ENCODE measurements at regions of chr18 and their contacts with region 1.

Region 1: DNA sequence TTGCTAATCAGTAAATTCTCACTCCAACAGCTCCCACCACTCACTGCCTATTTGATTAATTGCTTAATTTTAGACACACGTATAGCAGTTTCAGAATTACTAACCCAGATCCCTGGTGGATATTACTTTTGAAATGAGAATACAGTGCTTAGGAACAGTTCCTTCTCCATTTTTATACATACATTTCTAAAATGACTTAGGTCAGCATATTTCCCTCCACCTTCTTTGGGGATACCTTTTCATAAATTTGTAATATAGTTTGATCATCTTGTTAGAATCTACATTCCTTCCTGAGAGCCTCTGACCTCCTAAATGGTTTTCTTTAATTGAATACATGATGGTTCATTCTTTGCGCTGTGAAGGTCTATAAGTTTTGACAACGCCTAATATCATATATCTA is 279.8 kb upstream of the NETO1 start:
- DNase-seq: no peak
- H3K4me3 ChIP-seq: no peak overlapping the region
- H3K27ac ChIP-seq: no peak overlapping the region
- H3K27me3 ChIP-seq: peaks cover 3% of the 10 kb centered on the region
- CTCF ChIP-seq: no peak

Region 2: GRCh38 chr18:73136134-73136533 is 11.5 kb before region 1 on chr18:
- CTCF ChIA-PET with region 1: interaction called, 21 read pairs
- POLR2A ChIA-PET with region 1: no interaction called
- DNase-seq: no peak
- H3K4me3 ChIP-seq: no peak overlapping the region
- H3K27ac ChIP-seq: no peak overlapping the region
- H3K27me3 ChIP-seq: no peaks in the 10 kb centered on the region
- CTCF ChIP-seq: peak; percentile 62

Measured in AG04450 (cell line).